CD4-positive, alpha-beta T cell (primary cell): ENCODE measurements at regions of chr5 and their contacts with region 1.

Region 1: GRCh38 chr5:90264689-90265544 is 144.6 kb downstream of the CETN3 start:
- DNase-seq: peak in 13 of 14 experiments; percentile 1 to 64 (median 16)
- ATAC-seq: no peak
- H3K4me3 ChIP-seq: no peak overlapping the region
- H3K4me3 Mint-ChIP-seq: no peak overlapping the region
- H3K27ac ChIP-seq: no peak overlapping the region
- H3K27ac Mint-ChIP-seq: no peak overlapping the region
- H3K4me1 ChIP-seq: no peaks in the 10 kb centered on the region
- H3K4me1 Mint-ChIP-seq: no peaks in the 10 kb centered on the region
- H3K27me3 ChIP-seq: no peaks in the 10 kb centered on the region
- H3K27me3 Mint-ChIP-seq: peaks cover 6% of the 10 kb centered on the region
- CTCF ChIP-seq: peak; percentile 83

Region 2: GRCh38 chr5:88729084-88729828 is 1535.7 kb before region 1 on chr5:
- CTCF ChIA-PET with region 1: interaction called, 3 read pairs
- POLR2A ChIA-PET with region 1: no interaction called
- intact Hi-C with region 1: loop called (anchors 1 to 2 kb)
- DNase-seq: peak in 13 of 14 experiments; percentile 7 to 79 (median 25)
- ATAC-seq: peak; percentile 83
- H3K4me3 ChIP-seq: no peak overlapping the region
- H3K4me3 Mint-ChIP-seq: no peak overlapping the region
- H3K27ac ChIP-seq: no peak overlapping the region
- H3K27ac Mint-ChIP-seq: no peak overlapping the region
- H3K4me1 ChIP-seq: no peaks in the 10 kb centered on the region
- H3K4me1 Mint-ChIP-seq: peaks cover 4% of the 10 kb centered on the region
- H3K27me3 ChIP-seq: peaks cover 1 to 7% of the 10 kb centered on the region in 2 experiments
- H3K27me3 Mint-ChIP-seq: peaks cover 26% of the 10 kb centered on the region
- CTCF ChIP-seq: peak; percentile 79

Region 3: GRCh38 chr5:90783460-90784333 is 518.8 kb after region 1 on chr5:
- CTCF ChIA-PET with region 1: interaction called, 3 read pairs
- POLR2A ChIA-PET with region 1: no interaction called
- intact Hi-C with region 1: loop called in 1 of 2 experiments (anchors 5 kb)
- DNase-seq: peak; percentile 40 to 77 (median 60)
- ATAC-seq: peak; percentile 57
- H3K4me3 ChIP-seq: no peak overlapping the region
- H3K4me3 Mint-ChIP-seq: no peak overlapping the region
- H3K27ac ChIP-seq: no peak overlapping the region
- H3K27ac Mint-ChIP-seq: no peak overlapping the region
- H3K4me1 ChIP-seq: no peaks in the 10 kb centered on the region
- H3K4me1 Mint-ChIP-seq: no peaks in the 10 kb centered on the region
- H3K27me3 ChIP-seq: no peaks in the 10 kb centered on the region
- H3K27me3 Mint-ChIP-seq: peaks cover 14% of the 10 kb centered on the region
- CTCF ChIP-seq: peak; percentile 94